ENCODE measurements at regions of chr20 and their contacts with region 1.

Region 1: DNA sequence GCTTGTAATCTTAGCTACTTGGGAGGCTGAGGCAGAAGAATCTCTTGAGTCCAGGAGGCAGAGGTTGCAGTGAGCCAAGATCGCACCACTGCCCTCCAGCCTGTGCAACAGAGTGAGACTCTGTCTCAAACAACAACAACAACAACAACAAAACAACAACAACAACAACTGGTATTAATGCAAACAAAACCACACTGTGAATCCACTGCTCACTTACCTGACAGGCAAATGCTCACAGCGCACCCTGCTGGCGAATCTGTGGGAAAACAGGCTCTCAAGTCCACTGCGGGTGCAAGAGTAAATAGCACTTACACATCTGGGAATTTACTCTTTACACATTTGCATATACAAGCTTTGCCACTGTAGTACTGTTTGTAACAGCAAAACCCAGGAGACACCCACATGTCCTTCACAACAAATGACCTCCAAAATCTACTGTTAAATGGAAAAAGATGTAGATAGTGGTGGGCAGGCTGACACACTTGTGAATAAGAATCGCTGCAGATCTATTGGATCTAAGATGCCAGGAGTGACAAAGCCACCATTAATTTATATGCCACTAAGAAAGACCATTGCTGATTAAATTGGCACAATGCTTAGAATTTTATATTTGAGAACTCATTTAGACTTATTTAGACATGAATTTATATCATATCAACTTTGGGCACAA is 29.3 kb downstream of the NSFL1C start:
- DNase-seq: peak; percentile 86
- ATAC-seq: peak; percentile 69
- H3K4me3 ChIP-seq: no peak overlapping the region
- H3K27ac ChIP-seq: no peak overlapping the region
- H3K4me1 ChIP-seq: peaks cover 12% of the 10 kb centered on the region
- H3K27me3 ChIP-seq: no peaks in the 10 kb centered on the region
- CTCF ChIP-seq: peak; percentile 96

Region 2: DNA sequence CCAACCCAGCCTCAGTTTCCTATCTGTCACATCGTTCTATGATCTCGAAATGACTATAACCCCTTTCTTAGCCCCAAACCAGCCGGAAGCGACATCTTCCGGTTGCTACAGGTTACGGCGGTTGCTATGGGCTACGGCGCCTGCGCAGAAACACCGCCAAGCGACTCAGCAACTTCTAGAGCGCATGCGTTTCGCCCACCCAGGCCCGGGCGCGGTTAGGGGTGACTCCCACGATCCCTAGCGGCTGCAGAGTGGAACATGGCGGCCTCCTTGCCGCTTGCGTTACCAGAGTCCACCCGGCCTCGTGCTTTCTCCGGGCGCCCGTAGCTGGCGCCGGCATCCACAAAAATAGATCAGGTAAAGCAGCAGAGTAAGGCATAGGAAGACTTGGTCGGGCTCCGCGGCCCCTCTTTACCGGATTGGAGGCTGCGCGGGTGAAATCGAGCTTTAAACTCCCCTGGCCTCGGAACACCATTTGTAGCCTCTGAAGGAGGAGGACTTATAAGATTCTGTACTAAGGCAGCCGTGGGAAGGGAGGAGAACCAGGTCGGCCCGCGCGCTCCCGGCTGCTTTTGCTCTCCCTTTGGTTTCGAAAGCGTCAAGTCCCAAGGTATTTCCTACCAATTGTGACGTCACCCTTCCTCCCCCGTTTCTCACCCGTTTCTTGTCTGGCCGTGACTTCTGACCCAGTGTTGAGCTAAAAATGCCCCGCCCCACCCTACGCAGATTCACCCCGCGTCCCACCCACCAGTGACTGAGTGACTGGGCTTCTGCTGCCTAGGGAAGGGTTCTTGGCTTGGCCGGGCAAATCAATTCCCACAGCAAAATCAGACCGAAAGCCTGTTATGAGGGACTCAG is 112.0 kb before region 1 on chr20:
- CTCF ChIA-PET with region 1: interaction called, 6 read pairs
- POLR2A ChIA-PET with region 1: no interaction called
- intact Hi-C with region 1: loop called (anchors 5 kb)
- DNase-seq: peak; percentile 98
- ATAC-seq: peak; percentile 66
- H3K4me3 ChIP-seq: peak overlapping the region; percentile 74
- H3K27ac ChIP-seq: peak overlapping the region; percentile 92
- H3K4me1 ChIP-seq: peaks cover 71% of the 10 kb centered on the region
- H3K27me3 ChIP-seq: no peaks in the 10 kb centered on the region
- CTCF ChIP-seq: no peak

Region 3: DNA sequence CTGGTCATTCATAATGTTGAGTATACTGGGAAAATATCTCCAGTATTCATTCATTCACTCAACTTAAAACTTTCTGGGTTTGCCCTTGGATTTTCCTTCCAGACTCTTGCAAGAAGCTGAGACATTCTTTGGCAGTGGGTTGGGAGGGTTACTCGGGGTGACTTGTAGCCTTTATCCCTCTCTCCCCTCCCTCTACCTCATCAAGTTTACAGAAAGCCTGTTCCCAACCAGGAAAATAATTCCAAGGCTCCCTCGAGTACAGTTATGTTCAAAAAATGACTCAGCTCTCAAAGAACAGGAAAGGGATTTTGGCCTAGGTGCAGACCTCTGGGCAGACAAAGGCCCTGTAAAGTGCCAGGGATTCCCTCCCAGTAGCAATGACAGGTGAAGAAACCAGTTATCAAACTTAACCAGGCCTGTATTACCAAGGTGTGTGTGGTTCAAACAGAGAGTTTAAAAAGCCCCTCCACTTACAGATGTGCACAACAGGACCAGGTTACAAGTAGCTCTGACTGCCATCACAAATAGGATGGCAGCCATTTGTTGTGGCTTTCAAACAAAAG is 66.7 kb before region 1 on chr20:
- CTCF ChIA-PET with region 1: interaction called, 3 read pairs
- POLR2A ChIA-PET with region 1: no interaction called
- intact Hi-C with region 1: loop called (anchors 1 kb)
- DNase-seq: peak; percentile 37
- ATAC-seq: peak; percentile 9; the same call in 1 of the 2 replicates
- H3K4me3 ChIP-seq: no peak overlapping the region
- H3K27ac ChIP-seq: 0 out of 2 replicates have a peak overlapping the region, but pooled peaks have one; percentile 16
- H3K4me1 ChIP-seq: peaks cover 54% of the 10 kb centered on the region
- H3K27me3 ChIP-seq: no peaks in the 10 kb centered on the region
- CTCF ChIP-seq: no peak

Region 4: DNA sequence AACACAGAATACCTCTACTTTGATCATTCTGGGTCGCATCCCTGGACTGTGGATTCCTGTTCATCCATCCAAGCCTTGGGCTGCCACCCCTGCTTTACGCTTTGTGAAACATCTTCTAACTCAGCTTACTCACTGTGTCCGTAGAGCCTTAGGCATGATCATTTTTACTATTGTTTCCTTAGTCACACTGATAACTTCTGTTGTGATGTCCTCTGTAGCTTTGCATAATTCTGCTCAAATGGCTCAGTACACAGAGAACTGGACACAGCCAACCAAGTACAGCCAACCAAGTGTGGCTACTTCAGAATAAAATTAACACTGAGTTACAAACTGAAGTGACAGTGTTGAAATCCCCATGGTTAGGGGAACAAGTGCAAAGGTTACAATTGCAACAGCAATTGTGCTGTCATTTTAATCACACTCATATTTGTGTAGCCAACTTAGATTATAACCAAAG is 35.9 kb before region 1 on chr20:
- CTCF ChIA-PET with region 1: interaction called, 4 read pairs
- POLR2A ChIA-PET with region 1: no interaction called
- intact Hi-C with region 1: loop called (anchors 2 kb)
- DNase-seq: peak; percentile 79
- ATAC-seq: peak; percentile 40
- H3K4me3 ChIP-seq: no peak overlapping the region
- H3K27ac ChIP-seq: peak overlapping the region; percentile 93
- H3K4me1 ChIP-seq: peaks cover 57% of the 10 kb centered on the region
- H3K27me3 ChIP-seq: no peaks in the 10 kb centered on the region
- CTCF ChIP-seq: no peak

Region 5: DNA sequence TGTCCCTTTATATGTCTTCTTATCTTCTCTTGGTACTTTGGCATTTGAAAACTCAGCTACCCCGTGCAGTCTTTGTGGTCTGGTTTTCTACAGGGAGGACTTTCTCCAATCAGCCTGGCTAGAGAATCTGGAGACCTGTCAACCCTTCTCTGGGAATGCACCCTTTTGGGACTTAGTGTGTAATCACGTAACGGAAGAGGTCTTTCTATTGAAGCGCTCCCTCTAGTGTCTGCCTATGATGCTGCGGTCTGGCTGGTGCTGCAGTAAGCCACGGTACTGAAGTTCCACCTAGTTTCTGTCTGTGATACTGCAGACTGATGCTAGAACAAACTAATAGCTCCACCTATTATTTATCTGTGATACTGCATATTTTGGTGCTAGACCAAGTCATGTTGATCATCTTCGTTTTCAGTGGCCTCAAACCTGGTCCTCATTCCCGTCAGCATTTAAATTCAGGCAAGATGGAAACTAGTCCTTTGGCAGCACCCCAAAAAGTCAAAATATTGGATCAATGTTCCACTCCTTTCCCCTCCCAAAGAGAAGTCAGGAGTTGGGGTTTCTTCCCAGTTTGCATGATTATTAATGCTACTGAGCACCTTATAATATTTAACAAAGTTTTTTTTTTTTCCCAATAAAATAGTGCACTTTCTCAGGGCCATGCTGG is 66.3 kb after region 1 on chr20:
- CTCF ChIA-PET with region 1: interaction called, 6 read pairs
- POLR2A ChIA-PET with region 1: no interaction called
- intact Hi-C with region 1: loop called (anchors 1 kb)
- DNase-seq: peak; percentile 98
- ATAC-seq: peak; percentile 85
- H3K4me3 ChIP-seq: no peak overlapping the region
- H3K27ac ChIP-seq: peak overlapping the region; percentile 85; the same call in 1 of the 2 replicates
- H3K4me1 ChIP-seq: peaks cover 50% of the 10 kb centered on the region
- H3K27me3 ChIP-seq: no peaks in the 10 kb centered on the region
- CTCF ChIP-seq: peak; percentile 100

Measured in PC-3 (cell line).